ENCODE measurements at regions of chrX and their contacts with region 1.

Region 1: DNA sequence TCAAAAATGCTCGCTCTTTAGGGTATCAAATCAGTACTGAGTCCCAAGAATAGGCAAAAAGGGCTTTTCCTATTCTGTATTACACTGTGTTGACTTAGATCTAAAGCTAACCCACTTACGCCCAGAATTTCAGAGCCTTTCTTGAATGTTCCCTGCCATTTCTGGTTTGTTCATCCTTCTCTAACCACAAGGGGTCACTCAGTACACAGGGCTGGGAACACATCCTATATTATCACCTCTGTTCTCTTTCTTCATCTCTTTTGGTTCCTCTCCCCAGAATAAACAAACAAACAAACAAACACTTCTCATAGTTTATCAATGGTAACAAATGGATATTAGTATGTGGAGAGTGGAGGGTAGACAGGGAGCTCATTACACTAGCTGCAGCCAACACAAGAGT is 25.5 kb upstream of the MORC4 start:
- DNase-seq: peak; percentile 36
- H3K4me3 ChIP-seq: no peak overlapping the region; a peak in 1 of 4 replicates
- H3K27ac ChIP-seq: no peak overlapping the region
- H3K4me1 ChIP-seq: no peaks in the 10 kb centered on the region
- H3K27me3 ChIP-seq: peaks cover 6% of the 10 kb centered on the region
- CTCF ChIP-seq: peak; percentile 72
- EP300 ChIP-seq: no peak
- RAD21 ChIP-seq: peak; percentile 83

Region 2: DNA sequence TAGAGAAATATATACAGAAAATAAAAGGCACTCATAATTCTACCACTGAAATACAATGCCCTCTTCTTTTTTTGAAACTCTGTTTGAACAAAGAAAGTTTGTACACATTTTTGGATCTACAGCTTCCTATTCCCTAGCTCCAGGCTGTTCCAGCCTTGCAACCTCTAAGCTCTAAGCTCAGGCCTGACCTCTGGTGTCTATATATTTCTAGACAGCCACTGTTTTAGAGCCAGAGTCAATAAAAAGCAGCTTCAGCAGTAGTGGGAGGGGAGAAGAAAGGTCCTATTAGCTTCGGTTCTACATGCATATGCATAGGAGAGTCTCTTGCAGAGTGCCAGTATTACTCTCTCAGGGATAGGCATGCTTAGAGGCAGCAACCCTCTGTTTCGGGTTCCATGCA is 65.6 kb before region 1 on chrX:
- CTCF ChIA-PET with region 1: no interaction called
- POLR2A ChIA-PET with region 1: no interaction called
- DNase-seq: no peak
- H3K4me3 ChIP-seq: no peak overlapping the region
- H3K27ac ChIP-seq: no peak overlapping the region
- H3K4me1 ChIP-seq: peaks cover 3 to 4% of the 10 kb centered on the region in 2 experiments; a peak in 2 of 4 replicates
- H3K27me3 ChIP-seq: no peaks in the 10 kb centered on the region
- CTCF ChIP-seq: peak; percentile 51
- EP300 ChIP-seq: no peak
- RAD21 ChIP-seq: no peak; the same call in 1 of the 2 replicates

Region 3: GRCh38 chrX:107272431-107272921 is 246.9 kb after region 1 on chrX:
- CTCF ChIA-PET with region 1: interaction called, 11 read pairs
- POLR2A ChIA-PET with region 1: no interaction called
- DNase-seq: peak; percentile 41
- H3K4me3 ChIP-seq: peak overlapping the region in 1 of 2 experiments; percentile 19; a peak in 1 of 4 replicates
- H3K27ac ChIP-seq: no peak overlapping the region
- H3K4me1 ChIP-seq: no peaks in the 10 kb centered on the region
- H3K27me3 ChIP-seq: peaks cover 37% of the 10 kb centered on the region; the same call in 1 of the 2 replicates
- CTCF ChIP-seq: no peak; the same call in 1 of the 2 replicates
- EP300 ChIP-seq: no peak
- RAD21 ChIP-seq: peak; percentile 25

Region 4: DNA sequence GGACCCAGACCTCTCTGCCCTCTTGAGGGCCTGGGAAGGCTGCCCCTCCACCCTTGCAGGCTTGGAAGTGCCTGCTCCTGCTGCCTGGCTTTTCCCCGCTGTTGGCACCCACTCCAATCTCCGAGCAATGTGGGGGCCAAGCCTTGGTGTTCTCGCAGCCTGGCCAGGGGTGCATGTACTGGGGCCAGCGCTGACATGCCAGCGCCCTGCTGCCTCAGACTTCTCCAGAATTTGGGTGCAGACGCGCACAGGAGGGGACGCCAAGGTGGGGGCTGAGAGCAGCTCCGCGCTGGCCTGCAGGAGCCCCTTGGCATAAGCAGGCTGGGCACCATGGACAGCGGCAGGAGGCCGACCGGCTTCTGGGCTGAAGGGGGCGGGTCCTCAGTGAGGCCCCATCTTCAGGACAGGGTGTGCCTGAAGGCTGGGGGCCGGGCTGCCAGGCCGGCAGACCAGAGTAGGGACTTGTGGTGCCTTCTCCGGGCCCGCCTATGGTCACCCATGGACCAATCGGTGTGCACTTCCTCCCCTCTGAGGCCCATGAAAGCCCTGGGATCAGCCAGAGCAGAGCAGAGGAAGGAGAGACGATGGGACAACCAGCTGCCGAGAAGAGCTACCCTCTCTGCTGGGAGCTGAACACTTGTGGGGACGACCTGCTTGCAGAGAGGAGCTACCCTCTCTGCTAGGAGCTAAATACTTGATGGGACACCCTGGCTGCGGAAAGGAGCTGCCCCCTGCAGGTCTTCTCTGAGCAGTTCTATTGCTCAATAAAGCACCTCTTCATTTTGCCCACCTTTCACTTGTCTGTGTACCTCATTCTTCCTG is 299.2 kb after region 1 on chrX:
- CTCF ChIA-PET with region 1: interaction called, 10 read pairs
- POLR2A ChIA-PET with region 1: no interaction called
- DNase-seq: peak; percentile 74
- H3K4me3 ChIP-seq: peak overlapping the region in 1 of 2 experiments; percentile 7; a peak in 1 of 4 replicates
- H3K27ac ChIP-seq: no peak overlapping the region
- H3K4me1 ChIP-seq: no peaks in the 10 kb centered on the region; a peak in 1 of 4 replicates
- H3K27me3 ChIP-seq: peaks cover 7% of the 10 kb centered on the region
- CTCF ChIP-seq: peak; percentile 32; the same call in 1 of the 2 replicates
- EP300 ChIP-seq: no peak
- RAD21 ChIP-seq: peak; percentile 48

Measured in SK-N-SH (cell line).